A549 (cell line): ENCODE measurements at regions of chr2 and their contacts with region 1.

Region 1: GRCh38 chr2:72887754-72888437 is 688 bp downstream of the SPR start:
- DNase-seq: peak; percentile 85 to 93
- ATAC-seq: peak; percentile 70 to 79
- H3K4me3 ChIP-seq: peak overlapping the region; percentile 77
- H3K27ac ChIP-seq: peak overlapping the region; percentile 92 to 96
- H3K4me1 ChIP-seq: peaks cover 22% of the 10 kb centered on the region
- CTCF ChIP-seq: peak; percentile 96
- EP300 ChIP-seq: no peak
- POLR2A ChIP-seq: peak; percentile 38; the same call in 1 of the 2 replicates
- RAD21 ChIP-seq: peak; percentile 56 to 75

Region 2: DNA sequence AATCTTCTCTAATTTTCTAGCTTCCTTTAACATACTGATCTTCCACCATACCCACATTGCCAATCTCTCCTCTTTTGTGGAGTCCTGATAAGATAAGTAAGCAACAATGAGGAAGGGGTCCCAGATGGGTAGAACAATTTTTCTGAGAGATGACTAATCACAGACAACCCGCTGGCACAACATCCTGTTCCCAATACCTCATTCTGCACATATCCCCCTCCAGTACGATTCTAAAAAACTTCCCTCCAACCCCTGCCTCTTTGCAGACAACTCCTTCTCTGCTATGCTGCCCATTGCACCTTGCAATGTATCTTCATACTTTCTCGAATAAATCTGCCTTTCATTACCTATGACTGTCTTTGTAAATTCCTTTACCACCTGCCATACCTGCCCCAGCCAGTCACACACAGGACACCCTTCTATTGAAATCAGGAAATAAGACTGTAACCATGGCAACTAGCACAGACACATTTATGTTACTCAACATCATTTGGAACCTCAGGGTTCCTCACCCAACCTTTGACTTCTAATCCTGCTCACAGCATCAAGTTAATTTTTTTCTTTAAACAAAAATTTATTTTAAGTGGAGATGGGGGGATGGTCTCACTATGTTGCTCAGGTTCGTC is 54.7 kb before region 1 on chr2:
- CTCF ChIA-PET with region 1: interaction called, 13 read pairs
- POLR2A ChIA-PET with region 1: no interaction called
- DNase-seq: no peak
- ATAC-seq: no peak; a peak in 1 of 6 replicates
- H3K4me3 ChIP-seq: no peak overlapping the region
- H3K27ac ChIP-seq: no peak overlapping the region
- H3K4me1 ChIP-seq: peaks cover 2% of the 10 kb centered on the region
- CTCF ChIP-seq: no peak
- EP300 ChIP-seq: no peak
- POLR2A ChIP-seq: no peak
- RAD21 ChIP-seq: no peak

Region 3: GRCh38 chr2:72915907-72916742 is 28.2 kb after region 1 on chr2:
- CTCF ChIA-PET with region 1: interaction called, 211 read pairs
- POLR2A ChIA-PET with region 1: no interaction called
- DNase-seq: peak; percentile 67 to 68
- ATAC-seq: peak; percentile 46 to 75; a peak in 5 of 6 replicates
- H3K4me3 ChIP-seq: peak overlapping the region; percentile 48
- H3K27ac ChIP-seq: peak overlapping the region in 1 of 2 experiments; percentile 16; a peak in 2 of 6 replicates
- H3K4me1 ChIP-seq: peaks cover 41% of the 10 kb centered on the region
- CTCF ChIP-seq: no peak
- EP300 ChIP-seq: no peak
- POLR2A ChIP-seq: no peak
- RAD21 ChIP-seq: no peak

Region 4: GRCh38 chr2:72953976-72954375 is 66.1 kb after region 1 on chr2:
- CTCF ChIA-PET with region 1: interaction called, 17 read pairs
- POLR2A ChIA-PET with region 1: no interaction called
- DNase-seq: no peak
- ATAC-seq: no peak
- H3K4me3 ChIP-seq: no peak overlapping the region
- H3K27ac ChIP-seq: no peak overlapping the region
- H3K4me1 ChIP-seq: no peaks in the 10 kb centered on the region
- CTCF ChIP-seq: no peak
- EP300 ChIP-seq: no peak
- POLR2A ChIP-seq: no peak
- RAD21 ChIP-seq: no peak

Region 5: DNA sequence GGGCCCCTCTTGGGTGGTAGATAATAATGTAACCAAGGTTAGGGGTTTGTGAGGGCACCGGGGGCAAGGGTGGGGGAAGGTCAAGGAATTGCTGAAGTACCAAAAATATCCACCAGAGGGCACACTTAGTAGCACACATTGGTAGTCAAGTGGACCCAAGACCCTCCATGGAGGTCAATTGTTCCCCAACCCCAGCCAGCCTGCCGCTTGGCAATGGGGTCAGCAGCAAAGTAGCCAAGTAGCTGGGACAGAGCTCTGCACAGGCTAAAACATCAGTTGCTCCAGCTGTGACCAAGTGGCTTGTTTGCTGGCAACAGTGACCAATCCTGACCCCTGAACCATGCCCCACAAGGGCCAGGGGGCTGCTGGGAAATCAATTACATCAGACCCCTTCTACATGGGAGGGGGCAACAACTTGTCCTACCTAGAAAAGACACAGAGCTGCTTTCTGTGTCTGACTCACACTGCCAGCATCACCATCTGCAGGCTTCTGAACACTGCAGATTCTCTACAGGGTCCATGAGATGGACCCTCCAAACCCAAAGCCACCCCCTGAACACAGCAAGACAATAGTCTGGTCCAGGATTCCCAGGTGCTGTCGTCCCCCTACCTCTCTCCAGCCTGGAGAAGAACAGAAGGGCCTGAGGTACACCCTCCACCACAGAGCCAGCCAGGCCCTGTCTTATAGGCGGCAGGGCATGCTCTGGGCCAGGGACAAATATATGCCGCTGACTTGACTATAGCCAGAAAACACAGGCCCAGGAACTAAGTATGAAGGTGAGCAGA is 105.4 kb after region 1 on chr2:
- CTCF ChIA-PET with region 1: interaction called, 19 read pairs
- POLR2A ChIA-PET with region 1: no interaction called
- DNase-seq: peak; percentile 42 to 89
- ATAC-seq: peak; percentile 33 to 79; a peak in 4 of 6 replicates
- H3K4me3 ChIP-seq: no peak overlapping the region
- H3K27ac ChIP-seq: no peak overlapping the region
- H3K4me1 ChIP-seq: no peaks in the 10 kb centered on the region
- CTCF ChIP-seq: peak; percentile 90
- EP300 ChIP-seq: no peak
- POLR2A ChIP-seq: no peak
- RAD21 ChIP-seq: peak; percentile 63 to 77

Region 6: DNA sequence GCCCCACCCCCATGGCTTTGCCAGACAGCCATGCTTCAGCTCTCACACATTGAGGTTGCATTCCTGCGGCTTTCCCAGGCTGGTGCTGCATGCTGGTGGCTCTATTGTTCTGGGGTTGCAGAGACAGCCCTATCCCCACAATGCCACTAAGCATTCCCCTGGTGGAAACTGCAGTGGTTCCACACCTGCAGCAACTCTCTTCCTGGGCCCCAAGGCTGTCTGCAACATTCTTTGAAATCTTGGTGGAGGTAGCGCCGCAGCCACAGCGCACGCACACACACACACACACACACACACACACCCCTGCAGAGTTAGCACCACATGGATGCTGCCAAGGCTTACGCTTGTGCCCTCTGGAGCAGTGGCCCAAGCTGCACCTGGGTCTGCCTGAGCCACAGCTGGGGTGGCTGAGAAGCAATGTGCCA is 162.2 kb after region 1 on chr2:
- CTCF ChIA-PET with region 1: no interaction called
- POLR2A ChIA-PET with region 1: no interaction called
- DNase-seq: no peak
- ATAC-seq: peak; percentile 24 to 51; a peak in 2 of 6 replicates
- H3K4me3 ChIP-seq: no peak overlapping the region
- H3K27ac ChIP-seq: no peak overlapping the region
- H3K4me1 ChIP-seq: 0 out of 3 replicates have a peak, but pooled peaks cover 5% of the 10 kb centered on the region
- CTCF ChIP-seq: no peak
- EP300 ChIP-seq: no peak
- POLR2A ChIP-seq: no peak
- RAD21 ChIP-seq: no peak

Region 7: GRCh38 chr2:73069041-73069854 is 181.4 kb after region 1 on chr2:
- CTCF ChIA-PET with region 1: no interaction called
- POLR2A ChIA-PET with region 1: no interaction called
- DNase-seq: no peak
- ATAC-seq: no peak
- H3K4me3 ChIP-seq: peak overlapping the region; percentile 79
- H3K27ac ChIP-seq: peak overlapping the region; percentile 87 to 93; a peak in 5 of 6 replicates
- H3K4me1 ChIP-seq: peaks cover 45% of the 10 kb centered on the region
- CTCF ChIP-seq: no peak
- EP300 ChIP-seq: no peak
- POLR2A ChIP-seq: no peak
- RAD21 ChIP-seq: no peak

Region 8: DNA sequence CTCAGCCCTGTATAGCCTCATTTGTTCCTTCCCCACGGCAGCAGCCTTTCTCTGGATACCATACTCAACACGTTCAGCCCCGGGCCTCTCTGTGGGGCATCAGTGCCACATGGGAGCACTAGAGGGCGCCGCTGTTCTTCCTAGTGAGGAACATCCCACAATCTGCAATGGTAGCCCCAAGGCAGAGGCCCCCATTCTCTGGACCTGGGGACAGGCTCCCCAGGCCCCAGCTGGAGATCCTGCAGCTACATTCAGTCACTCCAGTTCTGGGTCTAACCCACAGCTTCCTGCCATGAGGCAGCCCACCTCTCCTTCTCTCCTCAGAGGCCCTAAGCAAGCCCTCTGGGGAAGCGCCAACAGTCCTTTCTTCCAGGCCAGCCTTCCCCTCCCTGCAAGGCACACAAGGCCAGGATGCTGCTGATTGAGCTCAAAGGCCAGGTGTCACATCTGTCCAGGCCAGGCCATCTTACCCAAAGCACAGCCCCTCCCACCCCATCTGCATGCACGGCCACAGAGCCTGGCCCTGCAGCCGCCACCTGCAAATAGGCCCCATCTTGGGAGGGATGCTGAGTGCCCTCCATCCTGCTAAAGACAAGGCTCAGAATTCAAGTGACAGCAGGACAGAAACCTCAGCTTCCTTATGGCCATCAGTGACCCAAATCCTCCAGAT is 197.9 kb after region 1 on chr2:
- CTCF ChIA-PET with region 1: interaction called, 53 read pairs
- POLR2A ChIA-PET with region 1: no interaction called
- DNase-seq: peak; percentile 74 to 87
- ATAC-seq: peak; percentile 78 to 92; a peak in 5 of 6 replicates
- H3K4me3 ChIP-seq: no peak overlapping the region
- H3K27ac ChIP-seq: no peak overlapping the region
- H3K4me1 ChIP-seq: peaks cover 18% of the 10 kb centered on the region
- CTCF ChIP-seq: peak; percentile 98
- EP300 ChIP-seq: no peak
- POLR2A ChIP-seq: no peak
- RAD21 ChIP-seq: peak; percentile 97 to 98

Region 9: GRCh38 chr2:73212448-73213176 is 324.7 kb after region 1 on chr2:
- CTCF ChIA-PET with region 1: interaction called, 86 read pairs
- POLR2A ChIA-PET with region 1: interaction called, 3 read pairs
- DNase-seq: peak; percentile 81 to 92
- ATAC-seq: peak; percentile 76 to 89
- H3K4me3 ChIP-seq: no peak overlapping the region
- H3K27ac ChIP-seq: no peak overlapping the region
- H3K4me1 ChIP-seq: peaks cover 16% of the 10 kb centered on the region
- CTCF ChIP-seq: peak; percentile 92
- EP300 ChIP-seq: no peak
- POLR2A ChIP-seq: no peak
- RAD21 ChIP-seq: peak; percentile 72 to 73